Activated CD4-positive, alpha-beta memory T cell treated with anti-CD3 and anti-CD28 coated beads, Interleukin-2, amount 10 ng/mL, durations not matched to agents 7 days and 5 days (primary cell): ENCODE measurements at regions of chr15 and their contacts with region 1.

Region 1: GRCh38 chr15:63188926-63189871 is at the start of gene RAB8B:
- DNase-seq: peak; percentile 99
- H3K4me3 Mint-ChIP-seq: peak within 1 kb of the TSS; percentile 97
- H3K27ac Mint-ChIP-seq: peak within 1 kb of the TSS; percentile 100
- H3K4me1 Mint-ChIP-seq: peaks cover 47% of the 10 kb centered on the region
- H3K27me3 Mint-ChIP-seq: peaks cover 11% of the 10 kb centered on the region
- total RNA-seq, gene RAB8B: 133 to 139 TPM

Region 2: GRCh38 chr15:63157118-63157843 is 31.9 kb before region 1 on chr15 and contains the start of gene RPS27L:
- CTCF ChIA-PET with region 1: interaction called, 12 read pairs
- POLR2A ChIA-PET with region 1: interaction called, 56 read pairs
- DNase-seq: peak; percentile 91
- H3K4me3 Mint-ChIP-seq: peak within 1 kb of the TSS; percentile 99
- H3K27ac Mint-ChIP-seq: peak within 1 kb of the TSS; percentile 98
- H3K4me1 Mint-ChIP-seq: peaks cover 25% of the 10 kb centered on the region
- H3K27me3 Mint-ChIP-seq: no peaks in the 10 kb centered on the region
- total RNA-seq, gene RPS27L: 171 to 173 TPM

Region 3: GRCh38 chr15:63203451-63204090 is 14.4 kb after region 1 on chr15:
- CTCF ChIA-PET with region 1: interaction called, 10 read pairs
- POLR2A ChIA-PET with region 1: interaction called, 91 read pairs
- DNase-seq: peak; percentile 44
- H3K4me3 Mint-ChIP-seq: no peak overlapping the region
- H3K27ac Mint-ChIP-seq: no peak overlapping the region
- H3K4me1 Mint-ChIP-seq: peaks cover 75% of the 10 kb centered on the region
- H3K27me3 Mint-ChIP-seq: no peaks in the 10 kb centered on the region

Region 4: GRCh38 chr15:63234451-63234870 is 45.3 kb after region 1 on chr15:
- CTCF ChIA-PET with region 1: interaction called, 4 read pairs
- POLR2A ChIA-PET with region 1: interaction called, 122 read pairs
- DNase-seq: no peak
- H3K4me3 Mint-ChIP-seq: no peak overlapping the region
- H3K27ac Mint-ChIP-seq: no peak overlapping the region
- H3K4me1 Mint-ChIP-seq: peaks cover 62% of the 10 kb centered on the region
- H3K27me3 Mint-ChIP-seq: no peaks in the 10 kb centered on the region

Region 5: GRCh38 chr15:63277038-63277892 is 88.1 kb after region 1 on chr15 and contains the start of gene APH1B:
- CTCF ChIA-PET with region 1: interaction called, 3 read pairs
- POLR2A ChIA-PET with region 1: interaction called, 18 read pairs
- DNase-seq: peak; percentile 79
- H3K4me3 Mint-ChIP-seq: peak within 1 kb of the TSS; percentile 81
- H3K27ac Mint-ChIP-seq: peak within 1 kb of the TSS; percentile 63
- H3K4me1 Mint-ChIP-seq: peaks cover 38% of the 10 kb centered on the region
- H3K27me3 Mint-ChIP-seq: no peaks in the 10 kb centered on the region
- total RNA-seq, gene APH1B: 10.1 to 10.6 TPM